Heart right ventricle (tissue), 16 donors: ENCODE measurements at regions of chr10 and their contacts with region 1.

Region 1: GRCh38 chr10:69425511-69426298 is 9.0 kb upstream of the TACR2 start:
- DNase-seq: no peak
- ATAC-seq: no peak
- H3K4me3 ChIP-seq: no peak overlapping the region
- H3K27ac ChIP-seq: no peak overlapping the region
- H3K4me1 ChIP-seq: peaks cover 0 to 18% (median 6%) of the 10 kb centered on the region in 9 donors
- H3K27me3 ChIP-seq: no peaks in the 10 kb centered on the region
- CTCF ChIP-seq: no peak

Region 2: GRCh38 chr10:69494626-69495558 is 69.2 kb after region 1 on chr10:
- intact Hi-C with region 1: loop called in 1 of 10 experiments (anchors 5 kb)
- DNase-seq: no peak
- ATAC-seq: peak in 3 of 8 donors; percentile 34 to 43 (median 38)
- H3K4me3 ChIP-seq: no peak overlapping the region
- H3K27ac ChIP-seq: peak overlapping the region in 1 of 10 donors; percentile 14
- H3K4me1 ChIP-seq: peaks cover 0 to 8% (median 0%) of the 10 kb centered on the region in 9 donors
- H3K27me3 ChIP-seq: no peaks in the 10 kb centered on the region
- CTCF ChIP-seq: no peak

Region 3: GRCh38 chr10:69639291-69640195 is 213.8 kb after region 1 on chr10:
- intact Hi-C with region 1: loop called in 8 of 10 experiments (anchors 5 to 10 kb)
- DNase-seq: peak; percentile 36 to 64
- ATAC-seq: peak in 6 of 8 donors; percentile 32 to 75 (median 60)
- H3K4me3 ChIP-seq: no peak overlapping the region
- H3K27ac ChIP-seq: no peak overlapping the region
- H3K4me1 ChIP-seq: no peaks in the 10 kb centered on the region
- H3K27me3 ChIP-seq: peaks cover 0 to 37% (median 12%) of the 10 kb centered on the region in 7 donors
- CTCF ChIP-seq: peak; percentile 75 to 90 (median 87)